ENCODE measurements at regions of chr20 and their contacts with region 1.

Region 1: DNA sequence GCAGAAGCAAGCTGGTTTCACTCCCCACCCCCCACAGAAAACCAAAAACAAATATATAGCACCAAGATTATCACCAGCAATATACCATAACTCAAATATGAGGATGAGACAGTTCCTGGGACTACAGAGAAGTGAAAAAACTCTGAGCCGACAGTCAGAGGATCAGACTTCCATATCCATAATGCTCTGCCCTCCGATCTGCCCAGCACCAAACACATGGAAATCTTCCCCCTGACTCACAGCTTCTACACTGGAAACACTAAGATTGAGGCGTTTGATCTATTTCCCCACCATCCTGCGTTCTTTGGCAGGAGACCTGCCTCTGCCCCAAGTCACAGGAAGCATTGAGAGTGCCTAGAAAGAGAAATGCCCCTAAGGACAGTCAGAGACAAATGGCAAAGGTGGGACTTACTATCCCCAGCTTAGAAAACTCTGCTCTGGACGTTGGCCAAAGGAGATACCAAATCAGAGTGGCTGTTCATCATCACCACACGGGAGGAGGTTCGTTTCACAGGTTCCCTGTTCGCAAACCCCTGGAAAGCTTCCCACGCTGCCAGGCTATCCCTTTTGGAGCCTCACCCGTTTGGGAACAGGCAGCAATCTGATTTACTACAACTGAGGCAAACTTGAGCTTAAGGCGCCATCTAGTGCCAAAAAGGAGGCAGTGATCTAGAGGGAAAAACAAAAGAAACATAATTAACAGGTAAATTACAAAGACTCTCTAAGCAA is 48.7 kb upstream of the SRSF6 start:
- DNase-seq: peak; percentile 51
- ATAC-seq: peak; percentile 86
- H3K4me3 ChIP-seq: no peak overlapping the region
- H3K27ac ChIP-seq: no peak overlapping the region
- H3K4me1 ChIP-seq: 0 out of 4 replicates have a peak, but pooled peaks cover 0 to 3% of the 10 kb centered on the region in 2 experiments
- H3K27me3 ChIP-seq: no peaks in the 10 kb centered on the region; the same call in 1 of the 2 replicates
- CTCF ChIP-seq: peak; percentile 56 to 94 (median 78); a peak in 5 of 6 replicates
- POLR2A ChIP-seq: no peak
- RAD21 ChIP-seq: peak; percentile 84

Region 2: DNA sequence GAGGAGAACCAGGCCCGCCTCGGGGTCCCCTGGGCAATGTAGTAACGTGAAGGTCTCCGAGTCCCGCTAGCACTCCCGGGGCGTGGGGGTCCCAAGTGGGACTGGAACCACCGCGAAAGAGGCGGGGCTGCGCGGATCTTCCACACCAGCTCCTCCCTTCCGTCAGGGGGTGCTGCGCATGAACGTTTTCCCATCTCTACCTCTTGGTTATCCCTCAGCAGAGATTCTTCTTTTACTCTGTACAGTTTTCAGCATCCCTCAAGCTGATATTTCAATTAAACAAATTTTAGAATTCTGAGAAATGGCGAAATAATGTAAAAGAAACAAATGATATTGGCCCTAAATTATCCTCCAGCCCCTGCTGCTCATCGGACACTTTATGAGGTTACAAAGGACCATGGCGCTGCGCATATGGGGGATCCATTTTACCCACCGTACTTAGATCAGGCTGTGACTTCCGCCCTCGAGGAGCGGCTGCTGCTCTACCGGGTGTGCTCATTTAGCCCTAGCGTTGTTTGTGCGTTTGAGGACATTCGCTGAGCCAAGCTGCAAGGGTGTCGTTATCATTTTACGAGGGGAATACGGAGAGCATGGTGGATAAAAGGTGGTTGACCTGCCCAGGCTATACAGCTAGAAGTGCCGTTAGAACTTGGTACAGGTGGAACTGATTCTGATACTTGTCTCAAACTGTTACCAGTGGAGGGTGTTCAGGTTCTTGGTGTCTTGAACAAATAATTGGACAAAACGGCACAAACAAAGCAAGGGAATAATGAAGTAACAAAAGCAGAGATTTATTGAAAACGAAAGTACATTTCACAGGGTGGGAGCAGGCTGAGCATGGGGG is 1715.7 kb before region 1 on chr20:
- CTCF ChIA-PET with region 1: interaction called, 8 read pairs
- POLR2A ChIA-PET with region 1: no interaction called
- RAD21 ChIA-PET with region 1: no interaction called
- intact Hi-C with region 1: loop called (anchors 5 kb)
- DNase-seq: peak; percentile 90
- ATAC-seq: peak; percentile 90
- H3K4me3 ChIP-seq: peak overlapping the region; percentile 66 to 80
- H3K27ac ChIP-seq: peak overlapping the region; percentile 52
- H3K4me1 ChIP-seq: peaks cover 5 to 13% of the 10 kb centered on the region in 2 experiments; a peak in 3 of 4 replicates
- H3K27me3 ChIP-seq: no peaks in the 10 kb centered on the region
- CTCF ChIP-seq: peak; percentile 38 to 69 (median 41); a peak in 5 of 6 replicates
- POLR2A ChIP-seq: peak; percentile 77
- RAD21 ChIP-seq: no peak